ENCODE measurements at regions of chr7 and their contacts with region 1.

Region 1: DNA sequence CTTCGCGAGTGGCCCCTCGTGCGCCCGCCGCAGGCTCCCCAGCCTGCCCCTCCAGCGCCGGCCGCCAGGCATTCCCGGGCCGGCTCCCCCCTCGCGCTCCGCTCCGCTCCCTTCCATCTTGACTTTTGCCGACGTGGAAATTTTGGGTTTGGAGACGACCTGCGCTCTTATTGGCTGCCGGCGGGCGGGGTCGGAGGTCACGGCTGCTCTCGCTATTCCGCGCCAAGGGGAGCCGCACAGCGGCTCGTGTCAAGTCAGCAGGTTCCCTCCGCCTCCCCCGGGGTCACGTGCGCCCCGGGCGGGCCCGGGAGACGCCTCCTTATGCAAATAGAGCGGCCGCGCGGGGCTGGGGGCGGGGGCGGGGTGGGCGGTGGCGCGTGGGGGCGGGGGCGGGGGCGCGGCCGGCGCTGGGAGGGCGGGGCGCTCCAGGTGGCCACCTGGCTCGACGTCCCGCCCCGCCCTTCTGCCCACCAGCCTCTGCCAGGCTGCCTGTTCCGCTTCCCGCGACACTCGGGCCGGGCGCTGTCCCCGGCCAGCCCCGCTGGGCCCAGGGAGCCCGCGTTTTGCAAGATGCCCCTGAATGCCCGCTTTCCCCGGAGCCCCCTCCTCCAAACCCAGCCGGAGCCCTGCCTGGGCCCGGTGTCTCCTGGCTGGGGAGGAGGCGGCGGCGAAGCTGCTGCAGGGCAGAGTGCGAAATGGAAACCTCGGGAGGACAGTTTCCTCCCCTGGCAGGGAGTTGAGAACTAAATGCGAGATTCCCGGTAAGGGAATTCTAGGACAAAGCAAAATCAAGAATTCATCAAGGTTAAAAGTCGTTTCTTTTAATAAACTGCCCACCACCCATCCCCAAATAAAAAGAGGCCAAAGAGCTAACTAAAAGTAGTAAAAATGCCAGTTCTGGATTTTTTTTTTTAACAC is 200.7 kb upstream of the NFE2L3 start:
- DNase-seq: peak; percentile 88
- ATAC-seq: peak; percentile 74
- H3K4me3 ChIP-seq: peak overlapping the region; percentile 79 to 89 (median 85)
- H3K27ac ChIP-seq: peak overlapping the region; percentile 88
- H3K4me1 ChIP-seq: peaks cover 40% of the 10 kb centered on the region
- H3K27me3 ChIP-seq: no peaks in the 10 kb centered on the region
- CTCF ChIP-seq: no peak
- EP300 ChIP-seq: no peak
- POLR2A ChIP-seq: peak; percentile 63 to 70
- RAD21 ChIP-seq: peak; percentile 25

Region 2: DNA sequence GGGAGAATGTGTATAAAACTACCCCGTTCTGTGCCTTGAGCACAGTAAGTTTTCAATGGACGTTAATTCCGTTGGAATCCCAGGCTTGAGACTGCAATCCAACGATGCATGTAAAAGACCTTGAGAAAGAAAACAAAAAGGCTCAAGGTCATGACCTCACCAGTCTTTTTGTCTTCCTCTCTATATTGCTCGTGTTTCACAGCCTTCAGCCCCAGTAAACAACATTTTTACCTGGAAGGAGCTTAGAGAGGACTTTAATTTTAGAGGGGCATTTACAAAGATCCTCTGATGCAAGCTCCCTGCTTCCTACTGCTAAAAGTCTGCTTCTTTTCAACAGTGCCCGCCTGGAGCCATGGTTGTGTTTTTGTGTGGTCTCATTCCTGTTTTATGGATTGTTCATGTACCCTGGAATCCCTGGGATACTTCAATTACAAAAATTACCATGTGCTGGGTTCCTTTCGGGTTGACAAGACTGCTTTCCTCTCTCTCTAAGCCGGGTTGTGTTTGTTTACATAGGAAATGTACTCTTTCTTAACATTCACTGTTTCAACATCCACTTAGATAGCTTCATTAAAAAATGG is 119.4 kb before region 1 on chr7:
- CTCF ChIA-PET with region 1: no interaction called
- POLR2A ChIA-PET with region 1: no interaction called
- in situ Hi-C with region 1: no loop called
- intact Hi-C with region 1: no loop called
- DNase-seq: no peak
- ATAC-seq: peak; percentile 41; the same call in 2 of the 3 replicates
- H3K4me3 ChIP-seq: no peak overlapping the region
- H3K27ac ChIP-seq: no peak overlapping the region
- H3K4me1 ChIP-seq: peaks cover 22% of the 10 kb centered on the region
- H3K27me3 ChIP-seq: peaks cover 0 to 53% of the 10 kb centered on the region in 2 experiments; a peak in 3 of 5 replicates
- CTCF ChIP-seq: no peak
- EP300 ChIP-seq: no peak
- POLR2A ChIP-seq: no peak
- RAD21 ChIP-seq: no peak

Region 3: GRCh38 chr7:25877802-25878789 is 73.2 kb before region 1 on chr7:
- CTCF ChIA-PET with region 1: no interaction called
- POLR2A ChIA-PET with region 1: no interaction called
- in situ Hi-C with region 1: no loop called
- intact Hi-C with region 1: no loop called
- DNase-seq: no peak
- ATAC-seq: no peak
- H3K4me3 ChIP-seq: no peak overlapping the region
- H3K27ac ChIP-seq: no peak overlapping the region
- H3K4me1 ChIP-seq: no peaks in the 10 kb centered on the region
- H3K27me3 ChIP-seq: peaks cover 0 to 9% of the 10 kb centered on the region in 2 experiments; a peak in 1 of 5 replicates
- CTCF ChIP-seq: no peak
- EP300 ChIP-seq: no peak
- POLR2A ChIP-seq: no peak
- RAD21 ChIP-seq: no peak

Region 4: GRCh38 chr7:25928549-25929330 is 22.6 kb before region 1 on chr7:
- CTCF ChIA-PET with region 1: no interaction called
- POLR2A ChIA-PET with region 1: no interaction called
- in situ Hi-C with region 1: no loop called
- intact Hi-C with region 1: no loop called
- DNase-seq: no peak
- ATAC-seq: no peak
- H3K4me3 ChIP-seq: no peak overlapping the region
- H3K27ac ChIP-seq: no peak overlapping the region
- H3K4me1 ChIP-seq: no peaks in the 10 kb centered on the region
- H3K27me3 ChIP-seq: no peaks in the 10 kb centered on the region; a peak in 1 of 5 replicates
- CTCF ChIP-seq: no peak
- EP300 ChIP-seq: no peak
- POLR2A ChIP-seq: no peak
- RAD21 ChIP-seq: no peak

Region 5: DNA sequence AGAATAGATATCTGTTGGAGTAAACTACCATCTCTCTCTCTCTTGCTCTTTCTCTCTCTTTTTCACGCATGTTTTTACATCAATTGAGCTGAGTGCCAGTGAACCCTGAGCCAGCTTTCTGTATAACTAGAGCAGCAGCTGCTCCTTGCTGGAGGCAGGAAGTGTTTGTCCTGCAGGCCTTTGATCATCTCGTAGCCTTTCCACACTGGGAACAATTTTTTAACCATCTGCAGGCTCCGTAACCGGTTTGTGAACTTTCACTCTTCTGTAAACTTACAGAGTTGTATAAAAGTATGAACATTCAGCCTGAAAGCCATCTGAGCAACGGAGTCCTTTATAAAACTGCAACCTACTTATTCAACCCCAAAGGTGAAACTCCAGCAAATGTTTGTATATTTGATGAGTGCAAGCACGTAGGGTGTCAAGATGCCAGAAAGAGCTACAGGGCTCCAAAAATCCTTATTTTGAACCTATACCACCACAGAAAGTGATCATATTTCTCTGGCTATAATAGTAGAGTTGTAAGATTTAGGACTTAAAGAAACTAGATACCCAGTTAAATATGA is 37.9 kb after region 1 on chr7:
- CTCF ChIA-PET with region 1: no interaction called
- POLR2A ChIA-PET with region 1: no interaction called
- in situ Hi-C with region 1: no loop called
- intact Hi-C with region 1: loop called (anchors 5 kb)
- DNase-seq: peak; percentile 32
- ATAC-seq: peak; percentile 92
- H3K4me3 ChIP-seq: peak overlapping the region in 1 of 3 experiments; percentile 44; a peak in 2 of 6 replicates
- H3K27ac ChIP-seq: peak overlapping the region; percentile 44
- H3K4me1 ChIP-seq: peaks cover 15% of the 10 kb centered on the region
- H3K27me3 ChIP-seq: no peaks in the 10 kb centered on the region
- CTCF ChIP-seq: no peak
- EP300 ChIP-seq: no peak
- POLR2A ChIP-seq: no peak
- RAD21 ChIP-seq: no peak

Measured in HepG2 (cell line).